ENCODE measurements at regions of chr1 and their contacts with region 1.

Region 1: GRCh38 chr1:66402194-66402593 is 131.8 kb upstream of the SGIP1 start:
- DNase-seq: no peak
- H3K4me3 Mint-ChIP-seq: no peak overlapping the region
- H3K27ac Mint-ChIP-seq: no peak overlapping the region
- H3K4me1 Mint-ChIP-seq: peaks cover 32% of the 10 kb centered on the region
- H3K27me3 Mint-ChIP-seq: no peaks in the 10 kb centered on the region

Region 2: DNA sequence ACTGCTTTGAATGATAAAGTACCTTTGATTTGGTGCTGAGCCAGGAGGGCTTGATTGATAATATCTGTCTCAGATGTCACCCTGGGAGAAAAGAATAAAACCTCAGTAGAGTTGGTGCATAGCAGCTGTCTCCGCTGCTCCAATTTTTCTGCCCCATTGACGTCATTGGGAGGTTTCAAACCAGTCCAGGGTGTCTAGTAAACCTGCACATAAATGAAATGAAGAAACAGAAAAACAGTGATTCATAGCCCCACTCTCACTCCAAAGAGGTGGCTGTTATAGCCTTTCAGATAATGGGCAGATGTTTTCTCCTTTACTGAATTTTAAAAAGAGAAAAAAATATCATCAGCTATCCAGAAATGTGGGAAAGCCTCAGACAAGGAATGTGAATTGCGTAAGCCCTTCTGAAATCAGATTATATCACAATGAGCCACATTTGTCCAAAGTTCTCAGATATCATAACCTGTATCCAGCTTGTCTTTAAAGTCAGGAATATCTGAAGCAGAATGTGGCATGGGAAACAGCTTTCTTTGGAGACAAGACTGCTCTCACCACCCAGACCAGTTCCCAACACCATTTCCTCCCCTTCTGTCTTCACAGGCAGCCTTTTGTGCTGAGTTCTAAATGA is 219.5 kb before region 1 on chr1:
- CTCF ChIA-PET with region 1: no interaction called
- intact Hi-C with region 1: loop called (anchors 1 kb)
- DNase-seq: peak; percentile 79
- H3K4me3 Mint-ChIP-seq: no peak overlapping the region
- H3K27ac Mint-ChIP-seq: peak overlapping the region; percentile 13
- H3K4me1 Mint-ChIP-seq: peaks cover 33% of the 10 kb centered on the region
- H3K27me3 Mint-ChIP-seq: no peaks in the 10 kb centered on the region

Region 3: GRCh38 chr1:66258404-66259105 is 143.6 kb before region 1 on chr1:
- CTCF ChIA-PET with region 1: no interaction called
- intact Hi-C with region 1: loop called (anchors 1 kb)
- DNase-seq: peak; percentile 43
- H3K4me3 Mint-ChIP-seq: no peak overlapping the region
- H3K27ac Mint-ChIP-seq: peak overlapping the region; percentile 3
- H3K4me1 Mint-ChIP-seq: peaks cover 84% of the 10 kb centered on the region
- H3K27me3 Mint-ChIP-seq: no peaks in the 10 kb centered on the region

Region 4: DNA sequence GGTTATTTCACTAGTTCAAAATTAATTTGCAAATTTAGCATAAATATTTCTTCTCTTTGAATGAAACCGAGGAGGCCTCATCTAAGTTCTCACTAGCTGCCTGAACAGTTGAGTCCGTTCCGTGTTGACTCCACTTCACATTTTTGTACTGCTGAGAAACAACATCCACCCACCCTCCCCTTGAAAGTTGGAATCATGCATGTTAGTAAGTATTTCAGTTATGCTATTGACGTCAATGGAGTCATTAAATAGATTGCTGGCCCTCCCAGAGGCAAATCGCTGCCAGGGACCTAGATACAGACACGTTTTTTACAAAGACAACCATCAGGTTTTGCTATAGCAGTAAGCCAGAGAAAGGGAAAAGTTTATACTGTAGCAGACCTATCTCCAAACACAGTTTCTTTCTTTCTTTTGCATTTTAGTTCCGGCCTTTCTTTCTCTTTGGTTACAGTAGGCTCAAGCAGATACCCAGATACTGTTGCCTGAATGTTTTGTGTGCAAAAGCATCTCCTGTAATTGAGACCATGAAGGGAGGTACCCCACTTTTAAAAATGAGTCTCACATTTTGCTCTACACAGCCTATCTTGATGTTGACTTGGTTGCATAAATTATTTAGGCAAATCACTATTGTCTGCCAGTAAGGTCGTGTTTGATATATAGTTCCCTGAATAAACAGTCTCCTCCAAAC is 130.8 kb before region 1 on chr1:
- CTCF ChIA-PET with region 1: no interaction called
- intact Hi-C with region 1: loop called (anchors 2 kb)
- DNase-seq: peak; percentile 84
- H3K4me3 Mint-ChIP-seq: peak overlapping the region; percentile 54
- H3K27ac Mint-ChIP-seq: peak overlapping the region; percentile 90
- H3K4me1 Mint-ChIP-seq: peaks cover 74% of the 10 kb centered on the region
- H3K27me3 Mint-ChIP-seq: no peaks in the 10 kb centered on the region

Region 5: GRCh38 chr1:66300972-66301451 is 101.2 kb before region 1 on chr1:
- CTCF ChIA-PET with region 1: no interaction called
- intact Hi-C with region 1: loop called (anchors 1 kb)
- DNase-seq: peak; percentile 54
- H3K4me3 Mint-ChIP-seq: peak overlapping the region; percentile 40
- H3K27ac Mint-ChIP-seq: peak overlapping the region; percentile 69
- H3K4me1 Mint-ChIP-seq: peaks cover 38% of the 10 kb centered on the region
- H3K27me3 Mint-ChIP-seq: no peaks in the 10 kb centered on the region

Region 6: GRCh38 chr1:66413136-66413837 is 11.1 kb after region 1 on chr1:
- CTCF ChIA-PET with region 1: interaction called, 3 read pairs
- intact Hi-C with region 1: loop called (anchors 1 kb)
- DNase-seq: no peak
- H3K4me3 Mint-ChIP-seq: no peak overlapping the region
- H3K27ac Mint-ChIP-seq: no peak overlapping the region
- H3K4me1 Mint-ChIP-seq: peaks cover 10% of the 10 kb centered on the region
- H3K27me3 Mint-ChIP-seq: no peaks in the 10 kb centered on the region

Region 7: DNA sequence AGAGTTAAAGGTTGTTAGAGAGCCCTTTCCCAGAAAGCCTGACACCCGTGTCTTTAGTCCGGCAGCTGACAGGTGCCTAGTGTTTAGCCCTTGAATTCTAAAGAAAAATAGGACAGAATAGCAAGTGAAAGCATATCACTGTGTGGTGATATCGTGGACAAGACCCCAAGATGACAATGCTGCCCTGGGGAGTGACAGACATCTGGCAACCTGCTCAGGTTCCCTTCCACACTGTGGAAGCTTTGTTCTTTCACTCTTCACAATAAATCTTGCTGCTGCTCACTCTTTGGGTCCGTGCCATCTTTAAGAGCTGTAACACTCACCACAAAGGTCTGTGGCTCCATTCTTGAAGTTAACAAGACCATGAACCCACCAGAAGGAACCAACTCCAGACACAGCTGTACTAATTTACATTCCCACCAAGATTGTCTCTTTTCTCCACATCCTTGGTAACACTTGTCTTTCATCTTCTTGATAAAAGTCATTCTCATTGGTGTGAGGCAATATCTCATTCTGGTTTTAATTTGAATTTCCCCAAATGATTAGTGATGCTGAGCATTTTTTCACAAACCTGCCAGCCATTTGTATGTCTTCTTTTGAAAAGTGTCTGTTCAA is 24.2 kb after region 1 on chr1:
- CTCF ChIA-PET with region 1: interaction called, 6 read pairs
- intact Hi-C with region 1: loop called (anchors 1 kb)
- DNase-seq: no peak
- H3K4me3 Mint-ChIP-seq: no peak overlapping the region
- H3K27ac Mint-ChIP-seq: no peak overlapping the region
- H3K4me1 Mint-ChIP-seq: peaks cover 14% of the 10 kb centered on the region
- H3K27me3 Mint-ChIP-seq: no peaks in the 10 kb centered on the region

Region 8: GRCh38 chr1:66478116-66478515 is 75.9 kb after region 1 on chr1:
- CTCF ChIA-PET with region 1: no interaction called
- intact Hi-C with region 1: no loop called
- DNase-seq: no peak
- H3K4me3 Mint-ChIP-seq: no peak overlapping the region
- H3K27ac Mint-ChIP-seq: no peak overlapping the region
- H3K4me1 Mint-ChIP-seq: no peaks in the 10 kb centered on the region
- H3K27me3 Mint-ChIP-seq: peaks cover 20% of the 10 kb centered on the region

Region 9: DNA sequence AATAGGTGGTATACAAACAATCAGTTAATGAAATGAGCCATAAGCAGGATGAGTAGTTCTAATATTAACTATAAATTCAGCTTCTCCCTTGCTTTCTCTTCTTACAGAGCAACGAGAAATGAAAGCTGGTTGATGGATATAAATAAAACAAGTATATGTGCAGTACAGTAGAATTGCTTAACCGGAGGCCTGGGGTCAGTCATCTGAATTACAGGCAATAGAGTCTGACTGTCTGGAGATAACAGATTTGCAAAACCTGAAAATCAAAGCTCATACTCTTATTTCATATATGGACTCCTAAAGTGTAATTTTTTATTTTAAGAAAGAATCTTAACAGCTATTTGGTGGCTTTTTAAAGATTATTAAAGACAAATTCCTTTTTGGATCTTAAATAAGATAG is 88.6 kb after region 1 on chr1:
- CTCF ChIA-PET with region 1: no interaction called
- intact Hi-C with region 1: no loop called
- DNase-seq: no peak
- H3K4me3 Mint-ChIP-seq: no peak overlapping the region
- H3K27ac Mint-ChIP-seq: no peak overlapping the region
- H3K4me1 Mint-ChIP-seq: no peaks in the 10 kb centered on the region
- H3K27me3 Mint-ChIP-seq: no peaks in the 10 kb centered on the region